HCT116 (cell line): ENCODE measurements at regions of chr1 and their contacts with region 1.

Region 1: GRCh38 chr1:2044510-2045319 is 5.5 kb upstream of the PRKCZ start:
- DNase-seq: no peak
- ATAC-seq: peak; percentile 59
- H3K4me3 ChIP-seq: no peak overlapping the region
- H3K27ac ChIP-seq: peak overlapping the region; percentile 29; the same call in 1 of the 2 replicates
- H3K4me1 ChIP-seq: peaks cover 18 to 39% of the 10 kb centered on the region in 2 experiments
- H3K27me3 ChIP-seq: no peaks in the 10 kb centered on the region
- CTCF ChIP-seq: peak in 2 of 3 experiments; percentile 68 to 81; a peak in 4 of 6 replicates
- POLR2A ChIP-seq: no peak
- RAD21 ChIP-seq: no peak

Region 2: GRCh38 chr1:1906185-1907097 is 138.3 kb before region 1 on chr1:
- CTCF ChIA-PET with region 1: interaction called, 31 read pairs
- POLR2A ChIA-PET with region 1: interaction called, 5 read pairs
- RAD21 ChIA-PET with region 1: interaction called in 1 of 2 experiments, 5 read pairs
- intact Hi-C with region 1: loop called (anchors 5 kb)
- DNase-seq: peak; percentile 71
- ATAC-seq: peak; percentile 70
- H3K4me3 ChIP-seq: no peak overlapping the region
- H3K27ac ChIP-seq: peak overlapping the region; percentile 87
- H3K4me1 ChIP-seq: peaks cover 19 to 36% of the 10 kb centered on the region in 2 experiments
- H3K27me3 ChIP-seq: no peaks in the 10 kb centered on the region
- CTCF ChIP-seq: peak; percentile 93 to 96 (median 94)
- POLR2A ChIP-seq: no peak
- RAD21 ChIP-seq: peak; percentile 100

Region 3: GRCh38 chr1:1943834-1944570 is 100.7 kb before region 1 on chr1:
- CTCF ChIA-PET with region 1: interaction called, 52 read pairs
- POLR2A ChIA-PET with region 1: interaction called, 3 read pairs
- RAD21 ChIA-PET with region 1: interaction called, 4 to 5 read pairs
- intact Hi-C with region 1: loop called (anchors 1 kb)
- DNase-seq: peak; percentile 35
- ATAC-seq: peak; percentile 98
- H3K4me3 ChIP-seq: peak overlapping the region; percentile 35 to 55
- H3K27ac ChIP-seq: no peak overlapping the region; the same call in 1 of the 2 replicates
- H3K4me1 ChIP-seq: peaks cover 0 to 10% of the 10 kb centered on the region in 2 experiments; a peak in 1 of 4 replicates
- H3K27me3 ChIP-seq: no peaks in the 10 kb centered on the region
- CTCF ChIP-seq: peak; percentile 81 to 87 (median 83)
- POLR2A ChIP-seq: no peak
- RAD21 ChIP-seq: peak; percentile 73

Region 4: GRCh38 chr1:1959840-1960479 is 84.8 kb before region 1 on chr1:
- CTCF ChIA-PET with region 1: interaction called, 70 read pairs
- POLR2A ChIA-PET with region 1: interaction called, 4 read pairs
- RAD21 ChIA-PET with region 1: interaction called, 8 to 11 read pairs
- intact Hi-C with region 1: loop called (anchors 1 kb)
- DNase-seq: peak; percentile 71
- ATAC-seq: peak; percentile 94
- H3K4me3 ChIP-seq: peak overlapping the region; percentile 36 to 54
- H3K27ac ChIP-seq: peak overlapping the region; percentile 21; the same call in 1 of the 2 replicates
- H3K4me1 ChIP-seq: peaks cover 5 to 22% of the 10 kb centered on the region in 2 experiments; a peak in 3 of 4 replicates
- H3K27me3 ChIP-seq: no peaks in the 10 kb centered on the region
- CTCF ChIP-seq: peak; percentile 96 to 97 (median 96)
- POLR2A ChIP-seq: peak; percentile 27
- RAD21 ChIP-seq: peak; percentile 96